ENCODE measurements at regions of chr9 and their contacts with region 1.

Region 1: GRCh38 chr9:89418882-89419640 is 78.9 kb downstream of the SEMA4D start:
- DNase-seq: peak; percentile 69 to 86 (median 75)
- H3K4me3 ChIP-seq: peak overlapping the region in 1 of 2 donors; percentile 48
- H3K4me3 Mint-ChIP-seq: peak overlapping the region; percentile 81 to 94 (median 84)
- H3K27ac ChIP-seq: peak overlapping the region; percentile 73
- H3K27ac Mint-ChIP-seq: peak overlapping the region; percentile 83 to 97 (median 97)
- H3K4me1 ChIP-seq: peaks cover 100% of the 10 kb centered on the region
- H3K4me1 Mint-ChIP-seq: peaks cover 69 to 99% (median 80%) of the 10 kb centered on the region in 4 donors
- H3K27me3 ChIP-seq: no peaks in the 10 kb centered on the region
- H3K27me3 Mint-ChIP-seq: no peaks in the 10 kb centered on the region

Region 2: GRCh38 chr9:89254772-89255123 is 164.3 kb before region 1 on chr9:
- CTCF ChIA-PET with region 1: no interaction called
- POLR2A ChIA-PET with region 1: no interaction called
- intact Hi-C with region 1: no loop called
- DNase-seq: no peak
- H3K4me3 ChIP-seq: no peak overlapping the region
- H3K4me3 Mint-ChIP-seq: no peak overlapping the region
- H3K27ac ChIP-seq: no peak overlapping the region
- H3K27ac Mint-ChIP-seq: no peak overlapping the region
- H3K4me1 ChIP-seq: no peaks in the 10 kb centered on the region
- H3K4me1 Mint-ChIP-seq: no peaks in the 10 kb centered on the region
- H3K27me3 ChIP-seq: no peaks in the 10 kb centered on the region
- H3K27me3 Mint-ChIP-seq: peaks cover 0 to 2% of the 10 kb centered on the region in 2 donors

Region 3: DNA sequence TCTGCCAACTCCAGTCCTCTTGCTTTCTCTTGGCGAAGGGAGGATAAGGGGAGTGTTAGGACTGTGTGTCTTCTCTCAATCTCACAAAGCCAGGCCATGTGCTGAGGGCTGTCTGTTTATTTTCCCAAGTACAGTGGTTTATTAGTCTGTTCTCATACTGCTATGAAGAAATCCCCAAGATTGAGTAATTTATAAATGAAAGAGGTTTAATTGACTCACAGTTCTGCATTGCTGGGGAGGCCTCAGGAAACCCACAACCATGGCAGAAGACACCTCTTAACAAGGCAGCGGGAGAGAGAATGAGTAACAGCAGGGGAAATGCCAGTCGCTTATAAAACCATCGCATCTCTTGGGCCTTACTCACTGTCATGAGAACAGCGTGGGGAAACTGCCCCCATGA is 144.2 kb before region 1 on chr9:
- CTCF ChIA-PET with region 1: no interaction called
- POLR2A ChIA-PET with region 1: no interaction called
- intact Hi-C with region 1: no loop called
- DNase-seq: no peak
- H3K4me3 ChIP-seq: no peak overlapping the region
- H3K4me3 Mint-ChIP-seq: no peak overlapping the region
- H3K27ac ChIP-seq: no peak overlapping the region
- H3K27ac Mint-ChIP-seq: no peak overlapping the region
- H3K4me1 ChIP-seq: peaks cover 23% of the 10 kb centered on the region
- H3K4me1 Mint-ChIP-seq: peaks cover 17 to 25% (median 19%) of the 10 kb centered on the region in 4 donors
- H3K27me3 ChIP-seq: no peaks in the 10 kb centered on the region
- H3K27me3 Mint-ChIP-seq: peaks cover 1 to 13% of the 10 kb centered on the region in 2 donors

Region 4: GRCh38 chr9:89318123-89319014 is 100.7 kb before region 1 on chr9 and contains the start of gene SECISBP2:
- CTCF ChIA-PET with region 1: no interaction called
- POLR2A ChIA-PET with region 1: no interaction called
- intact Hi-C with region 1: loop called (anchors 5 kb)
- DNase-seq: peak; percentile 94 to 97 (median 94)
- H3K4me3 ChIP-seq: peak within 1 kb of the TSS; percentile 67 to 76
- H3K4me3 Mint-ChIP-seq: peak within 1 kb of the TSS; percentile 83 to 94 (median 92)
- H3K27ac ChIP-seq: peak within 1 kb of the TSS; percentile 100
- H3K27ac Mint-ChIP-seq: peak within 1 kb of the TSS; percentile 91 to 99 (median 98)
- H3K4me1 ChIP-seq: peaks cover 55% of the 10 kb centered on the region
- H3K4me1 Mint-ChIP-seq: peaks cover 38 to 69% (median 54%) of the 10 kb centered on the region in 4 donors
- H3K27me3 ChIP-seq: no peaks in the 10 kb centered on the region
- H3K27me3 Mint-ChIP-seq: peaks cover 0 to under 1% of the 10 kb centered on the region in 2 donors
- total RNA-seq, gene SECISBP2: 96.5 to 112 TPM

Region 5: GRCh38 chr9:89375191-89375760 is 43.8 kb before region 1 on chr9:
- CTCF ChIA-PET with region 1: no interaction called
- POLR2A ChIA-PET with region 1: interaction called, 5 read pairs
- intact Hi-C with region 1: loop called (anchors 5 kb)
- DNase-seq: peak in 2 of 5 donors; percentile 31 to 41
- H3K4me3 ChIP-seq: no peak overlapping the region
- H3K4me3 Mint-ChIP-seq: peak overlapping the region in 1 of 8 donors; percentile 29
- H3K27ac ChIP-seq: peak overlapping the region; percentile 27
- H3K27ac Mint-ChIP-seq: peak overlapping the region; percentile 73 to 92 (median 82)
- H3K4me1 ChIP-seq: peaks cover 25% of the 10 kb centered on the region
- H3K4me1 Mint-ChIP-seq: peaks cover 21 to 48% (median 37%) of the 10 kb centered on the region in 4 donors
- H3K27me3 ChIP-seq: no peaks in the 10 kb centered on the region
- H3K27me3 Mint-ChIP-seq: no peaks in the 10 kb centered on the region

Region 6: GRCh38 chr9:89437000-89437631 is 18.1 kb after region 1 on chr9:
- CTCF ChIA-PET with region 1: interaction called, 3 read pairs
- POLR2A ChIA-PET with region 1: interaction called, 10 read pairs
- intact Hi-C with region 1: loop called (anchors 1 kb)
- DNase-seq: peak; percentile 76 to 91 (median 78)
- H3K4me3 ChIP-seq: peak overlapping the region in 1 of 2 donors; percentile 17
- H3K4me3 Mint-ChIP-seq: peak overlapping the region; percentile 57 to 85 (median 74)
- H3K27ac ChIP-seq: peak overlapping the region; percentile 52
- H3K27ac Mint-ChIP-seq: peak overlapping the region; percentile 90 to 98 (median 95)
- H3K4me1 ChIP-seq: peaks cover 99% of the 10 kb centered on the region
- H3K4me1 Mint-ChIP-seq: peaks cover 61 to 96% (median 83%) of the 10 kb centered on the region in 4 donors
- H3K27me3 ChIP-seq: no peaks in the 10 kb centered on the region
- H3K27me3 Mint-ChIP-seq: no peaks in the 10 kb centered on the region

Region 7: GRCh38 chr9:89442981-89443814 is 24.1 kb after region 1 on chr9:
- CTCF ChIA-PET with region 1: interaction called, 3 read pairs
- POLR2A ChIA-PET with region 1: interaction called, 19 read pairs
- intact Hi-C with region 1: no loop called
- DNase-seq: no peak
- H3K4me3 ChIP-seq: no peak overlapping the region
- H3K4me3 Mint-ChIP-seq: peak overlapping the region in 2 of 8 donors; percentile 18 to 46
- H3K27ac ChIP-seq: peak overlapping the region; percentile 50
- H3K27ac Mint-ChIP-seq: peak overlapping the region; percentile 90 to 99 (median 99)
- H3K4me1 ChIP-seq: peaks cover 99% of the 10 kb centered on the region
- H3K4me1 Mint-ChIP-seq: peaks cover 68 to 94% (median 82%) of the 10 kb centered on the region in 4 donors
- H3K27me3 ChIP-seq: no peaks in the 10 kb centered on the region
- H3K27me3 Mint-ChIP-seq: no peaks in the 10 kb centered on the region

Region 8: DNA sequence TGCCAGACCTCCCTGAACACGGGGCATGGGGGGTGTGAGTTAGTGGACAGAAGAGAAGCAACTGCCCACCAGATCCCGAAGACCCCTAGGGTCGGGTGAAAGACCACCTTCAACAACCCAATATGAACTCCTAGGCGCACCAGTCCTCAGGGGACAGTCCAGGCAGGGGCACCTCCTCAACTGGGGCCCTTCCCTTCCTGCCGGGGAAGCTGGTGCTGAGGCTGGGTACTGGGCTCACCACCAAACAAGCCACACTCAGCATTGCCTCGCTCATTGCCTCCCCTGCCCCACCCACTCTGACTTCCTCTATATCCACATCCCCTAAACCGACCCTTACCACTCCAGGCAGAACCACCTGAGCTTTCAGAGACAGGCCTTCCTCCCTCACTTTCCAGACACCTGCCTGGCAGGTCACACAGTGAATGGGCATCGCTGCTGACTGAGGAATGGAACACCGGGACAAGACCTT is 36.3 kb after region 1 on chr9:
- CTCF ChIA-PET with region 1: interaction called, 5 read pairs
- POLR2A ChIA-PET with region 1: interaction called, 18 read pairs
- intact Hi-C with region 1: loop called (anchors 5 kb)
- DNase-seq: peak; percentile 50 to 72 (median 63)
- H3K4me3 ChIP-seq: peak overlapping the region in 1 of 2 donors; percentile 22
- H3K4me3 Mint-ChIP-seq: peak overlapping the region; percentile 72 to 90 (median 82)
- H3K27ac ChIP-seq: peak overlapping the region; percentile 68
- H3K27ac Mint-ChIP-seq: peak overlapping the region; percentile 92 to 98 (median 97)
- H3K4me1 ChIP-seq: peaks cover 97% of the 10 kb centered on the region
- H3K4me1 Mint-ChIP-seq: peaks cover 71 to 98% (median 87%) of the 10 kb centered on the region in 4 donors
- H3K27me3 ChIP-seq: no peaks in the 10 kb centered on the region
- H3K27me3 Mint-ChIP-seq: no peaks in the 10 kb centered on the region

Region 9: DNA sequence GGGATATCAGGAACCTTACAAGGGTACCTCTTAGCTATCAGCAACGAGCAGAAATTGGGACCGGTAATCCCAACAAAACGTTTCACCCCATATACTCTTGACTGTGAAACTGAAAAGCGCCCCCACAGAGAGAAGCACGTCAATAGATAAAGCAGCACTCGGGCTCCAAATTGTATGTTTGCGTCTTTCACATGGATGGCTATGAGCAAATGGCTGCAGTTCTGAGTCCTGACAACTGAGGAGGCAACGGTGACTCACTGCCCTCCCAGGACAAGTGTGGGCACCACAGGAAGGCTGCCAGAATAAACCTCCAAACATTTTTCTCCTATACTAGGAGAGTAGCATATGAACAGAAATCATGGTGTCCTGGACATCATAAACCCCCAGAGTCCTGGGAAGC is 42.2 kb after region 1 on chr9:
- CTCF ChIA-PET with region 1: interaction called, 5 read pairs
- POLR2A ChIA-PET with region 1: interaction called, 18 read pairs
- intact Hi-C with region 1: loop called (anchors 5 kb)
- DNase-seq: peak in 1 of 5 donors; percentile 70
- H3K4me3 ChIP-seq: no peak overlapping the region
- H3K4me3 Mint-ChIP-seq: peak overlapping the region in 7 of 8 donors; percentile 36 to 80 (median 65)
- H3K27ac ChIP-seq: peak overlapping the region; percentile 45
- H3K27ac Mint-ChIP-seq: peak overlapping the region; percentile 78 to 98 (median 92)
- H3K4me1 ChIP-seq: peaks cover 100% of the 10 kb centered on the region
- H3K4me1 Mint-ChIP-seq: peaks cover 81 to 100% (median 95%) of the 10 kb centered on the region in 4 donors
- H3K27me3 ChIP-seq: no peaks in the 10 kb centered on the region
- H3K27me3 Mint-ChIP-seq: no peaks in the 10 kb centered on the region

Measured in CD4-positive, alpha-beta memory T cell (primary cell).